ENCODE measurements at regions of chr13 and their contacts with region 1.

Region 1: DNA sequence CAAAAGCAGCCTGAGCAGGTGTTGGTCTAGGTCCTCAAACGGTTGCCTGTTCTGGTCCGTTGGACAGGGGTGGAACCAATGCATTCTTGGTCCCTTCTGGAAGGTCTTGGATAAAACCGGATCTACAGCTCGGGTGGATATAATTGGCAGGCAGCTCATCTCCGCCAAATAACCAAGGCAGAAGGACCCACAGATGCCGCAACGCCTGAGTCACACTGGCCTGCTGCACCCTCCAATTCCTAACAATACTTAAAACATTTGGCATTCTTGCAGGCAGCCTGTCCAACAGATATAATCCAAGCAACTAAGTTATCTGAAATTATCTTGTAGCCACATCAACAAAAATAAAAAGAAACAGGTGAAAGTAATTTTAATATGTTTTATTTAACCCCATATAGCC is 59.0 kb upstream of the FGF14 start:
- DNase-seq: no peak
- H3K4me3 ChIP-seq: no peak overlapping the region
- H3K27ac ChIP-seq: no peak overlapping the region
- H3K4me1 ChIP-seq: peaks cover 6% of the 10 kb centered on the region
- H3K27me3 ChIP-seq: no peaks in the 10 kb centered on the region
- CTCF ChIP-seq: no peak

Region 2: GRCh38 chr13:102141625-102142472 is 319.0 kb before region 1 on chr13:
- CTCF ChIA-PET with region 1: no interaction called
- POLR2A ChIA-PET with region 1: no interaction called
- intact Hi-C with region 1: loop called (anchors 2 kb)
- DNase-seq: peak; percentile 66
- H3K4me3 ChIP-seq: no peak overlapping the region
- H3K27ac ChIP-seq: no peak overlapping the region
- H3K4me1 ChIP-seq: peaks cover 23% of the 10 kb centered on the region
- H3K27me3 ChIP-seq: no peaks in the 10 kb centered on the region
- CTCF ChIP-seq: peak; percentile 87

Region 3: GRCh38 chr13:102197193-102197592 is 263.6 kb before region 1 on chr13:
- CTCF ChIA-PET with region 1: interaction called, 8 read pairs
- POLR2A ChIA-PET with region 1: no interaction called
- intact Hi-C with region 1: loop called (anchors 1 kb)
- DNase-seq: peak; percentile 78
- H3K4me3 ChIP-seq: no peak overlapping the region
- H3K27ac ChIP-seq: no peak overlapping the region
- H3K4me1 ChIP-seq: peaks cover 29% of the 10 kb centered on the region
- H3K27me3 ChIP-seq: no peaks in the 10 kb centered on the region
- CTCF ChIP-seq: peak; percentile 64

Region 4: GRCh38 chr13:102402290-102402689 is 58.5 kb before region 1 on chr13:
- CTCF ChIA-PET with region 1: no interaction called
- POLR2A ChIA-PET with region 1: no interaction called
- intact Hi-C with region 1: loop called (anchors 5 kb)
- DNase-seq: peak; percentile 95
- H3K4me3 ChIP-seq: peak overlapping the region; percentile 81
- H3K27ac ChIP-seq: peak overlapping the region; percentile 82
- H3K4me1 ChIP-seq: peaks cover 12% of the 10 kb centered on the region
- H3K27me3 ChIP-seq: no peaks in the 10 kb centered on the region
- CTCF ChIP-seq: peak; percentile 53